ENCODE measurements at regions of chr14 and their contacts with region 1.

Region 1: DNA sequence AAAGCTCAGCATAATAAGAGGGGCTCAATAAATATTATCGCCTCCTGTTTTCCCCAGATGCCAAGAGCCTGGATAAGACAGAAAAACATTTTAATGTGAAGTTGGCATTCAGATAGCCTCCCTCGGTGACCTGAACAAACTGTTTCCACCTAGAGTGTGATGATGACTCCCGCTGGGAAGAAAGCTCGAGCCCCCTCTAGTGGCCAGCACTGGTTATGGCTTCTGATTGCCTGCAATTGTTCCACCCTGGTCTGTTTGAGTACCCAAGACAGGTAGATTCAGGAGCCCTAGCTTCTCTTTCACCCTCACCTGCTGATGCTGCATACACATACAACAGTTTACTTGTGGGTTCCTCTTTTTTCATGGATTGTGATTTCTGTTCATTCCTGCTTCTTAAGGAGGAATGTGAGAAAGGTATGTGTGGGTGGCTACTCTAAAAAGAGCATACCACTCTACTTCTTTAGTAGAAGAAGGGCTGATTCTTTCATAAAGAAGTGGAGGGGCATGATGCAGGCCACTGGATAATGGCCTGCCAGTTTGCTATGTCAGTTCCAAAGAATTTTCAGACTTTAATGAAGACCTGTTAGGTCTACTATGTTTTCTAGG is 6.4 kb downstream of the ERG28 start:
- DNase-seq: peak; percentile 93
- H3K4me3 Mint-ChIP-seq: no peak overlapping the region
- H3K27ac Mint-ChIP-seq: no peak overlapping the region
- H3K4me1 Mint-ChIP-seq: peaks cover 6% of the 10 kb centered on the region
- H3K27me3 Mint-ChIP-seq: no peaks in the 10 kb centered on the region

Region 2: DNA sequence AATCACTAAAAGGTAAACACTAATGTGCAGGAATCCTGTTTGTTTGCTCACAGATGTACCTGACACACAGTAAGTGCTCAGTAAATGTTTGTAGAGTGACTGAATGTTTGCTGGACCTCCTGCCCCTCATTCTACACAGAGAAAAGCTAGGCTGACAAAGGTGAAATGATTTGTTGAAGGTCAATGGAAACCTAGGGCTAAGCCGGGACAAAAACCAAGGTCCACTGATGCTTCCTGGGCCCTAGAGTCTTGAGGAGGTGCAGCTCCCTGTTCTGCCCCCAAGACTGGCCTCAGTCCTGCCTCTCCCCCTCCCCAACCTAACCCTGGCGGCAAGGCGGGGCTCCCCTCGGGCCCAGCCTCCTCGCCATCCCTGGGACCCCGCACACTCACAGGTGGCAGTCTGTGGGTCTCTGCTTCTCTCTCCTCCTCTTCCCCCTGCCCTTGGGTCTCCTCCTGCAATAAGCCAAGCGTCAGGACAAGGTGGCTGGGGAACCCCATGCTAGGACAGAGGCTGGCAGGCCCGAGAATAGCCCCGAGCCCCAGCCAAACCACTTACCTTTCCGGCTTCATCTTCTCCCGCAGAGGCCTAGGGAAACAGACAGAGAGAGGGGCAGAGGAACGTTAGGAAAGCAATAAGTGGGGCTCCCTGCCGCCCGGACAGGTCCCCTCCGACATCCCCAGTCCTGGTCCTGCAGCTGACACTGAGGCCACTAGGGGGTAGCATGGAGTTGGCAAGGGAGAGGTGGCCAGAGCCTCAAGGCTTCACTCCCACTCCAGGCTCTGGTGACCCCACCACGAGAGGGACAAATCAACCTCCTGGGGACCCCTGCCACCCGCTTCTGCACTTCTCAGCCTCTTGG is 708.2 kb before region 1 on chr14:
- CTCF ChIA-PET with region 1: interaction called, 4 read pairs
- intact Hi-C with region 1: loop called (anchors 10 kb)
- DNase-seq: peak; percentile 87
- H3K4me3 Mint-ChIP-seq: peak overlapping the region; percentile 50
- H3K27ac Mint-ChIP-seq: peak overlapping the region; percentile 62
- H3K4me1 Mint-ChIP-seq: peaks cover 26% of the 10 kb centered on the region
- H3K27me3 Mint-ChIP-seq: peaks cover under 1% of the 10 kb centered on the region

Region 3: GRCh38 chr14:75109877-75110276 is 544.4 kb before region 1 on chr14:
- CTCF ChIA-PET with region 1: no interaction called
- intact Hi-C with region 1: no loop called
- DNase-seq: no peak
- H3K4me3 Mint-ChIP-seq: no peak overlapping the region
- H3K27ac Mint-ChIP-seq: no peak overlapping the region
- H3K4me1 Mint-ChIP-seq: no peaks in the 10 kb centered on the region
- H3K27me3 Mint-ChIP-seq: no peaks in the 10 kb centered on the region

Region 4: DNA sequence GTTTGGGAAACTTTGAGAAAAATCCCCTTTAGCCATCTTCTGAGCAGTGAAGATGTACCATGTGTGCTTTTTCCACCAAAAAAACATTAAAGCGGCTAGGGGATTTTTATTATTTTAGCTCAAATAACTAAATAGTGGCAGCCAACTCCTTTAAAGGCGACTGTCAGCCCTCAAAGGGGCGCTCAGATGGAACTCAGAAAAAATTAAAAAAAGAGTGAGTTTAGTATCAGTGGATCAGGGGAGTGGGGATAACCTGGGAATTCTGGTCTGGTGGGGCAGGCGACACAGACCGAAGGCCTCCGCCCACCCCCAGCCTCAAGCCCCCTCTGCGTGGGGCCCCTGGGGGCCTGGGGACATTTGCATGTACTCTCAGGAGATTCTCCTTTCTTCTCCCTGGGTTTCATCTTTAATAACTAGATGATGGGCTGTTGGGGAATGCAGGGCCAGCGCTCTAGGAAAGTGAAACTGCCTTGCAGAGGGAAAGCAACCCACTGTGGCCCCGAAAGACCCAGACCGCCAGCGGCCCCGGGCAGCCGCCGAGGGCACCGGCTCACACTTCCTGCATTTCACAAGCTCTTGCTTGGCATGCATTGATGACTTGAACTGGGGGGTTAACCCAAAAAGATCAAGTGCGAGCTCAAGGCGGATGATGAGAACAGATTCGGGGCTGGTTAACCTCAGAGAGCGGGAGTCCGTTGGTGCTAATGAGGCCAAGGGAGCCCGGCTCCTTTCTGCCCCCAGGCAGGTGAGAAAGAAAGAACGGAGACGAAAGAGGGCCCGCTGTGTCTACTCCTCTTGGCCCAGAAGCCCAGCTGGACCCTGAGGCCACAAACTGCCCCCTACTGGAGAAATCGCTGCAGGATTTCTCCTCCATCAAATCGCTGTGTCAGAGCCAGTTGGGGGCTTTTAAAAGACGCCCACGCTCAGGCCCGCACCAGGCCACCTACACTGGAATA is 139.3 kb before region 1 on chr14:
- CTCF ChIA-PET with region 1: interaction called, 6 read pairs
- intact Hi-C with region 1: loop called (anchors 1 kb)
- DNase-seq: peak; percentile 73
- H3K4me3 Mint-ChIP-seq: peak overlapping the region; percentile 70
- H3K27ac Mint-ChIP-seq: peak overlapping the region; percentile 89
- H3K4me1 Mint-ChIP-seq: peaks cover 58% of the 10 kb centered on the region
- H3K27me3 Mint-ChIP-seq: no peaks in the 10 kb centered on the region

Region 5: DNA sequence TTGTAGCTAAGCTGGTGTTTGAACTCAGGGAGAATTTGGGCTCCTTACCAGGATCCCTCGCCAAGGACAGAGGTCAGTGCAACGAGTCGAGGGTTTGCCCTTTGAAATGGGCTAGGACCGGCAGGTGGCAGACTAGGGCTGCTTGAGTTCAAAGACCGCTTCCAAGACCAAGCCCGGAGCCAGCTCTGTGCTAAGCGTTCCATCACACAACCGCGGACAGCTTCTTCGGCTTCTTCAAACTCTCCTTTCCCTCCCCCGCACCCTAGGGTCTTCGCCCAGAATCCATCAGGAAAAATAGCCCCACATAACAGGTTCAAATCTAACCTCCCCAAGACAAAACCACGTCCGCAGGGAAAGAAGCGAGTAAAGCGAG is 76.5 kb before region 1 on chr14:
- CTCF ChIA-PET with region 1: interaction called, 255 read pairs
- intact Hi-C with region 1: loop called (anchors 1 kb)
- DNase-seq: peak; percentile 88
- H3K4me3 Mint-ChIP-seq: peak overlapping the region; percentile 82
- H3K27ac Mint-ChIP-seq: peak overlapping the region; percentile 78
- H3K4me1 Mint-ChIP-seq: peaks cover 22% of the 10 kb centered on the region
- H3K27me3 Mint-ChIP-seq: no peaks in the 10 kb centered on the region

Region 6: DNA sequence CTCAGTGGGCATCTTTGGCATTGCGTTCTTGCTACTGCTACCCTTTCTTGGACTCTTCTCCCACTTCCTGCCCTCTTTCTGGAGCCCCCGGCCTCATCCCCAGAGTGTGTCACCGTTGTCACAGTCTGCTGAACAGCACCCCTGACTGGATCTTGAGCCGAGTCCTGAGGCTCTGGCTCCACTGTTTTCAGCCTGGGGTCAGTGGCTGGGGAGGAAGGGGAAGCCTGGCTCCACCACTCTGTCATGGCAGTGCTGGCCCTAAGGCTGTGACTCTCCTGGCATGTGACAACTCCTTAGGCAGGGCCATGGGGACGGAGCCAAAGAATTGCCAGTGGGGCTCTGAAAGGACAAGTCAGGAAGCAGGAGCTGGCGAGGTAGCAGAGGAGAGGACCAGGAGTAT is 12.2 kb before region 1 on chr14:
- CTCF ChIA-PET with region 1: interaction called, 11 read pairs
- intact Hi-C with region 1: no loop called
- DNase-seq: no peak
- H3K4me3 Mint-ChIP-seq: no peak overlapping the region
- H3K27ac Mint-ChIP-seq: no peak overlapping the region
- H3K4me1 Mint-ChIP-seq: no peaks in the 10 kb centered on the region
- H3K27me3 Mint-ChIP-seq: no peaks in the 10 kb centered on the region

Region 7: GRCh38 chr14:75794615-75795038 is 140.4 kb after region 1 on chr14:
- CTCF ChIA-PET with region 1: no interaction called
- intact Hi-C with region 1: no loop called
- DNase-seq: no peak
- H3K4me3 Mint-ChIP-seq: no peak overlapping the region
- H3K27ac Mint-ChIP-seq: no peak overlapping the region
- H3K4me1 Mint-ChIP-seq: no peaks in the 10 kb centered on the region
- H3K27me3 Mint-ChIP-seq: no peaks in the 10 kb centered on the region

Region 8: GRCh38 chr14:75851574-75851866 is 197.3 kb after region 1 on chr14:
- CTCF ChIA-PET with region 1: no interaction called
- intact Hi-C with region 1: no loop called
- DNase-seq: no peak
- H3K4me3 Mint-ChIP-seq: no peak overlapping the region
- H3K27ac Mint-ChIP-seq: no peak overlapping the region
- H3K4me1 Mint-ChIP-seq: no peaks in the 10 kb centered on the region
- H3K27me3 Mint-ChIP-seq: no peaks in the 10 kb centered on the region